Activated naive CD4-positive, alpha-beta T cell treated with anti-CD3 and anti-CD28 coated beads for 36 hours (primary cell): ENCODE measurements at regions of chr6 and their contacts with region 1.

Region 1: DNA sequence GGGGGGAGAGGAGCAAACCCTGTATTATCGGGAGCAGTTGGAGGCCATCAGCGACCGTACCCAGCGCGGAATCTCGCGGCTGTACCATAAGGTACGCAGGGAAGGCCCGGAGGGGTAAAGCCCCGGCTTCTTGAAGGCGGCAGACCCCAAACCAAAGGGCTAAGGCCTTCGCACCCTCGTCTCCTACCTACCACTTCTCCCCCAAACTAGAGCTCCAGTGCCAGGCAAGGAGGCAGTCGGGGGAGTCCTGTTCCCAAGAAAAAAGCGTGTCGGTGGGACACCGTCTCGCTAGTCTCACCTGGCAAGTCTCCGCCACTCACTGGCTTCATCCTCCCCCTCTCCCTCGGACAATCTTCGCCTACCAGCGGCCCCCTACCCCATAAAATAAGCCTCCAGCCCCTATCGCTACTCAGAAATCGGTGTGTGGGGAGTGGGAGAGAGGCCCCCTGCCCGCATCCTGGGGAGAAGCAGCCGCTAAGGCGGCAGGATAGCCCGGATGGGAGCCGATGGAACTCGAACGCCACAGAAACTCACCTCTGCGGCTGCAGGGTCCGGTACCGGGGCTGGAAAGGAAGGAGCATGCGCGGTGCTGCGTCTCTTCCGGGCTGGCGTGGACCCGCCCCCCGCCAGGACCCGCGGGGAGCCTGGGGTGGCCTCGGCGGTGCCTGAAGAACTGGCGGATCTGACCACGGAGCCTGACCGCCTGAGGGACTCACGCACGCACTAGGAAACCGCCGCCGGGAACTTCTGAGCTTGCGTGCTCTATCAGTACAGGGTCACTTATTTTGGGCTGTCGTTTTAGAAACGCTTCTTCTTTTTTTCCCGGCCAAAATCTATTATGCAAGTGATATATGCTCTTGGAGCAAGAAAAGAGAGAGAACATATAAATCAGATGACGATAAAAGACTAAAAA is at the start of gene RPS10:
- DNase-seq: peak; percentile 93
- H3K4me3 Mint-ChIP-seq: peak within 1 kb of the TSS; percentile 98
- H3K27ac Mint-ChIP-seq: peak within 1 kb of the TSS; percentile 98
- H3K4me1 Mint-ChIP-seq: peaks cover 38% of the 10 kb centered on the region
- H3K27me3 Mint-ChIP-seq: no peaks in the 10 kb centered on the region
- total RNA-seq, gene RPS10: 2,718 to 2,727 TPM

Region 2: GRCh38 chr6:34301408-34301807 is 124.3 kb before region 1 on chr6:
- CTCF ChIA-PET with region 1: no interaction called
- intact Hi-C with region 1: no loop called
- DNase-seq: no peak
- H3K4me3 Mint-ChIP-seq: no peak overlapping the region
- H3K27ac Mint-ChIP-seq: no peak overlapping the region
- H3K4me1 Mint-ChIP-seq: peaks cover 3% of the 10 kb centered on the region
- H3K27me3 Mint-ChIP-seq: no peaks in the 10 kb centered on the region

Region 3: DNA sequence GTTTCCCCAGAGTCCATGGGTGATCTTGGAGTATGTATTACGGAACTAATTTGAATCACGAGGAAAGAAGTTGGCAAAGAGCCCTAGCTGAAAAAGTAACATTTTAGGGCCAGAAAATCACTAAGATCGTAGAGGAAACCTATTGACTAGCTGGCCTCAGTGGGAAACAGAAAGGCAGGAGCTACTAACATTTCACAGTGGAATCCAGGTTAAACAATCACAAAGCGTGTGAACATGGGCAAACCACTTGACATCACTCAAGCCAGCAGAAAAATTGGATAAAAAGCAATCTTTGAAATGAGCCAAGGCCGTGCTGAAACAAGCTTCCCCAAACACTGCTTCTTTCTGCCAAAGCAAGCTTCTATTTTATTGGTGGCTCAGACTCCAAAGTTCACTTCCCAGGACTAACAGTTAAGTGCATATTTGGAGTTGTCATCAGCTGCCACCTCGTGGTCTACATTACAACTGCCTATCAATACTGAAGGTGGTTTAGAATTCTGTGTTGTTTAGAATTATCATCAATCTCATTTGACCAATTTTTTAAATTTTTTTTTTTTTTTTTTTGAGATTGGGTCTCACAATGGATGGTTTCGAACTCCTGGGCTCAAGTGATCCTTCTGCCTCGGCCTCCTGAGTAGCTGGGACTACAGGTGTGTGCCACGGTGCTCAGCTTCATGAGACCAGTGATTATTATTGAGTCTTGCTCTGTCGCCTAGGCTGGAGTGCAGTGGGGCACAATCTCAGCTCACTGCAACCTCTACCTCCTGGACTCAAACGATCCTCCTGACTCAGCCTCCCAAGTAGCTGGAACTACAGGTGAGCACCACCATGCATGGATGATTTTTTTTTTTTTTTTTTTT is 10.5 kb before region 1 on chr6:
- CTCF ChIA-PET with region 1: interaction called, 15 read pairs
- intact Hi-C with region 1: no loop called
- DNase-seq: peak; percentile 46
- H3K4me3 Mint-ChIP-seq: no peak overlapping the region
- H3K27ac Mint-ChIP-seq: no peak overlapping the region
- H3K4me1 Mint-ChIP-seq: peaks cover 12% of the 10 kb centered on the region
- H3K27me3 Mint-ChIP-seq: no peaks in the 10 kb centered on the region